ENCODE measurements at regions of chr17 and their contacts with region 1.

Region 1: GRCh38 chr17:1684378-1685189 is at the start of gene PRPF8:
- DNase-seq: peak; percentile 97 to 99 (median 98)
- H3K4me3 ChIP-seq: peak within 1 kb of the TSS; percentile 87
- H3K27ac ChIP-seq: peak within 1 kb of the TSS; percentile 50 to 88
- H3K4me1 ChIP-seq: peaks cover 7% of the 10 kb centered on the region
- H3K27me3 ChIP-seq: no peaks in the 10 kb centered on the region
- CTCF ChIP-seq: peak in 1 of 3 donors; percentile 10
- EP300 ChIP-seq: no peak
- POLR2A ChIP-seq: peak; percentile 99
- total RNA-seq, gene PRPF8: 146 to 379 (median 290) TPM

Region 2: DNA sequence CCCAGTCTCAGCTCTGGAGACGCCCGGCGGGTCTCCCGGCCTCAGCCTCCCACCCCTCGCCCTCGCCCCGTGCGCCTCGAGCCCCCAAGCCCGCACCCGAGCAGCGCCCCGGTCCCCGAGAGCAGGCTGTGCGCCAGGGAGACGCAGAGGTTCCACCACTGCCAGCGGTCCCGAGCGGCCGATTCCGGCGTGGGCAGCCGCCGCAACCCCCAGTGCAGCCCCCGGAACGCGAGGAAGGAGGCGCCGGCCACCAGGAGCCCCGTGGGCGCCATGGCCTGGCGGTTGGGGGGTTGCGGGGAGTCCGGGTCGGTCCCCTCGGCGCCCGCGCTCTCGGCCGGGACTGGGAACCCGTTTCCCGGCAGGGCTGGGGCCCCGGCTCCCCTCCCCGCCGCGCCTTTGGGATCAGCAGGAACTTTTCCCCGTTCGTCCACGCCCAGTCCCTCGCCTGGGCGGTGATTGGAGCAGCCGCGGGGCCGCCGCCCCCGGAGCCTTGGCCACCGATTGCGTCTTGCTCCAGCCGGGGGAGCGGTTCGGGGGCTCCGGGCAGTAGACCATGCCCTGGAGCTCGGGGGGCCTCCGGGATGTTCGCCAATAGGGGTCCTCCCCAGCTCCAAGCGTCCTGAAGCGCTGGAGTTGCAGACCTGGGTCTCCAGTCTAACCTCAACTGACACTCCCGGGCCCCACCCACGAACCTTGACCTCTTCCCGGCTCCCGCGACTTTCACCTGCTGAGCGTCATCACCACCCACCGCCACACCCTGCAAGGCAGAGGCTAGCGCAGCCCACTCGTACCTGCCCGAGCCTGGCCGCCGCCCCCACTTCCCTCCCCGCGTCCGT is 25.6 kb after region 1 on chr17 and contains the start of gene TLCD2:
- intact Hi-C with region 1: loop called in 2 of 4 experiments (anchors 2 to 5 kb)
- DNase-seq: peak; percentile 76 to 85 (median 82)
- H3K4me3 ChIP-seq: peak within 1 kb of the TSS; percentile 83
- H3K27ac ChIP-seq: peak within 1 kb of the TSS; percentile 53 to 77
- H3K4me1 ChIP-seq: peaks cover 15% of the 10 kb centered on the region
- H3K27me3 ChIP-seq: no peaks in the 10 kb centered on the region
- CTCF ChIP-seq: peak in 1 of 3 donors; percentile 9
- EP300 ChIP-seq: no peak
- POLR2A ChIP-seq: peak; percentile 69
- total RNA-seq, gene TLCD2: 1.5 to 9.1 (median 5.6) TPM

Measured in ovary (tissue), 10 donors.